WTC11 (cell line): ENCODE measurements at regions of chr12 and their contacts with region 1.

Region 1: GRCh38 chr12:65556681-65557437 is 267.4 kb upstream of the HMGA2 start:
- DNase-seq: peak; percentile 86
- ATAC-seq: peak; percentile 100
- H3K4me3 Mint-ChIP-seq: no peak overlapping the region
- H3K27ac Mint-ChIP-seq: no peak overlapping the region
- H3K4me1 Mint-ChIP-seq: 0 out of 2 replicates have a peak, but pooled peaks cover 4% of the 10 kb centered on the region
- H3K27me3 Mint-ChIP-seq: peaks cover 6% of the 10 kb centered on the region; the same call in 1 of the 2 replicates
- CTCF ChIP-seq: peak; percentile 77

Region 2: GRCh38 chr12:65534238-65534841 is 22.5 kb before region 1 on chr12:
- CTCF ChIA-PET with region 1: interaction called, 11 read pairs
- POLR2A ChIA-PET with region 1: no interaction called
- DNase-seq: no peak
- ATAC-seq: peak; percentile 27
- H3K4me3 Mint-ChIP-seq: no peak overlapping the region
- H3K27ac Mint-ChIP-seq: no peak overlapping the region; the same call in 1 of the 2 replicates
- H3K4me1 Mint-ChIP-seq: peaks cover 40% of the 10 kb centered on the region
- H3K27me3 Mint-ChIP-seq: no peaks in the 10 kb centered on the region; the same call in 1 of the 2 replicates
- CTCF ChIP-seq: no peak

Region 3: DNA sequence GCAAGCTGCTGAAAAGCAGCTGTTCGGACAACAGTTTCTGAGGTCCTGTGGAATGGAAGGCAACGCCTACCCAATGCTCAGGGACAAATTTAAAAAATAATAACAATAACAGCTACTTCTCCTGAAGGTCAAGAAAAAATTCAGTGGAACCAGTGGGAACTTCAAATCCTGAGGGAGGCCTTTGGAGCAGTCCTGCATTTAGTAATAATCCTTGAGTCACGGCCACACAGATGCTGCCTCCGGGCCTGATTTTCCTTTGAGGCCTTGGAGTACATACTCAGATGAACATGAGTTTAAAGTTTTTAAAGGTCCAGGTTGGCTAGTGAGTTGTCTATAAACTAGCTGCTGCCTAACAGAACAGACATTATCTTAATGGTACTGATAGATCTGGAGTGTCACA is 10.3 kb before region 1 on chr12:
- CTCF ChIA-PET with region 1: interaction called, 13 read pairs
- POLR2A ChIA-PET with region 1: no interaction called
- DNase-seq: no peak
- ATAC-seq: no peak
- H3K4me3 Mint-ChIP-seq: no peak overlapping the region
- H3K27ac Mint-ChIP-seq: no peak overlapping the region
- H3K4me1 Mint-ChIP-seq: no peaks in the 10 kb centered on the region
- H3K27me3 Mint-ChIP-seq: no peaks in the 10 kb centered on the region
- CTCF ChIP-seq: no peak

Region 4: DNA sequence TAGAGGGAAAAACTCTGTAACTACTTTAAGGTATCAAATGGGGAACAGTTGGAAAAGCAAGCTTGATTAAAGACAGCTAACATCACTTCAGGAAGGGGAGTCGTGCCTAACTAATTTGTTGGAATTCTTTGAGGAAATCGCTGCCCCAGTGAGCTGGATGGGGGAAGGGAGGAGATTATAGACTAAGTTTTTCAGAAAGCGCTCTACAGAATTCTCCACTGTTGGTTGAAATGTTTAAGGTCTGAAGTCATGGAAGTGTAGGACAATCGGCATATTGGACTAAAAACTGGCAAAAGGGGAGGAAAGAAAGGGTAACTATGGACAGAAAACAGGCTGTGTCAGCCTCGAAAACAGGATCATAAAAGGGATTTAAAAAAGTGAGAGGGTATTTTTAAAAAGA is 37.5 kb after region 1 on chr12:
- CTCF ChIA-PET with region 1: interaction called, 11 read pairs
- POLR2A ChIA-PET with region 1: no interaction called
- DNase-seq: no peak
- ATAC-seq: no peak
- H3K4me3 Mint-ChIP-seq: peak overlapping the region; percentile 67
- H3K27ac Mint-ChIP-seq: peak overlapping the region; percentile 68
- H3K4me1 Mint-ChIP-seq: peaks cover 50% of the 10 kb centered on the region
- H3K27me3 Mint-ChIP-seq: no peaks in the 10 kb centered on the region; the same call in 1 of the 2 replicates
- CTCF ChIP-seq: no peak

Region 5: GRCh38 chr12:66087365-66087943 is 530.6 kb after region 1 on chr12:
- CTCF ChIA-PET with region 1: interaction called, 12 read pairs
- POLR2A ChIA-PET with region 1: interaction called, 6 read pairs
- DNase-seq: peak; percentile 68
- ATAC-seq: peak; percentile 65
- H3K4me3 Mint-ChIP-seq: no peak overlapping the region
- H3K27ac Mint-ChIP-seq: no peak overlapping the region
- H3K4me1 Mint-ChIP-seq: peaks cover 3% of the 10 kb centered on the region
- H3K27me3 Mint-ChIP-seq: no peaks in the 10 kb centered on the region
- CTCF ChIP-seq: peak; percentile 47; the same call in 1 of the 2 replicates